B cell (primary cell): ENCODE measurements at regions of chr5 and their contacts with region 1.

Region 1: GRCh38 chr5:115289104-115289503 is 7.3 kb downstream of the CCDC112 start:
- DNase-seq: no peak
- ATAC-seq: no peak
- H3K4me3 ChIP-seq: no peak overlapping the region
- H3K4me3 Mint-ChIP-seq: no peak overlapping the region
- H3K27ac ChIP-seq: no peak overlapping the region
- H3K27ac Mint-ChIP-seq: no peak overlapping the region
- H3K4me1 ChIP-seq: no peaks in the 10 kb centered on the region
- H3K4me1 Mint-ChIP-seq: peaks cover 12% of the 10 kb centered on the region
- H3K27me3 ChIP-seq: no peaks in the 10 kb centered on the region
- H3K27me3 Mint-ChIP-seq: no peaks in the 10 kb centered on the region
- CTCF ChIP-seq: no peak

Region 2: DNA sequence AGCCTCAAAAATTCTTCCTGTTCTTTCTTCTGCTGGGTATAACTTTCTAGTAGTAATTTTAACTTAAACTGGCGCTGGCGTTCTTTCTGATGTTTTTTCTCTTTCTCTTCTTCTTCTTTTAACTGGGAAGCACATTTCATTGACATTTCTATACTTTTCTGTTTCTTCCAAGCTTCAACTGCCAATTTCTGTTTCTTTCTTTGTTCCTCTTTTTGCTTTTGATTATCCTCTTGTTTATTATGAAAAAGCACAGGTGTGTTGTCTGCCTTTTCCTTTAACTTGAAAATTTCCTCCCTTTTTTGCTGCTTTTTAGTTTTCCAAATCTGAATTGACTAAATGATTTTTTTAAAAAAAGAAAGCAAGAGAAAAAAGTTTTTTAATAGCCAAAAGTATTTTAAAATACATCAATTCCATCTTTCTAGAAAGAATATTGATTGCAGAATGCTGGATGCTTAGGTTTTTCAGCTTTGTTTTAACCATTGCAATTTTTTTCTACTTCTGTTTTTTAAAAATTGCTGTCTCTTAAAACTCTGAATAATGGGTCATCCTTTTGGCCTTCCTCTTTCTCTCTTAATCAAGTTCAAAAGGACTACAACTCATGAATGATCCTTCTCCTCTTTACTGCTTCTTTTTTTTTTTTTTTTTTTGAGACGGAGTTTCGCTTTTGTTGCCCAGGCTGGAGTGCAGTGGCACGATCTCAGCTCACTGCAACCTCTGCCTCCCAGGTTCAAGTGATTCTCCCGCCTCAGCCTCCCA is 17.6 kb before region 1 on chr5:
- CTCF ChIA-PET with region 1: no interaction called
- POLR2A ChIA-PET with region 1: no interaction called
- intact Hi-C with region 1: loop called (anchors 2 kb)
- DNase-seq: peak; percentile 16
- ATAC-seq: peak; percentile 33
- H3K4me3 ChIP-seq: peak overlapping the region in 1 of 5 experiments; percentile 34
- H3K4me3 Mint-ChIP-seq: peak overlapping the region; percentile 52
- H3K27ac ChIP-seq: peak overlapping the region; percentile 48 to 65
- H3K27ac Mint-ChIP-seq: peak overlapping the region; percentile 59
- H3K4me1 ChIP-seq: peaks cover 34 to 38% of the 10 kb centered on the region in 2 donors
- H3K4me1 Mint-ChIP-seq: peaks cover 44% of the 10 kb centered on the region
- H3K27me3 ChIP-seq: no peaks in the 10 kb centered on the region
- H3K27me3 Mint-ChIP-seq: no peaks in the 10 kb centered on the region
- CTCF ChIP-seq: no peak

Region 3: GRCh38 chr5:115377468-115378217 is 88.5 kb after region 1 on chr5:
- CTCF ChIA-PET with region 1: no interaction called
- POLR2A ChIA-PET with region 1: no interaction called
- intact Hi-C with region 1: no loop called
- DNase-seq: no peak
- ATAC-seq: no peak
- H3K4me3 ChIP-seq: no peak overlapping the region
- H3K4me3 Mint-ChIP-seq: no peak overlapping the region
- H3K27ac ChIP-seq: no peak overlapping the region
- H3K27ac Mint-ChIP-seq: no peak overlapping the region
- H3K4me1 ChIP-seq: no peaks in the 10 kb centered on the region
- H3K4me1 Mint-ChIP-seq: no peaks in the 10 kb centered on the region
- H3K27me3 ChIP-seq: no peaks in the 10 kb centered on the region
- H3K27me3 Mint-ChIP-seq: no peaks in the 10 kb centered on the region
- CTCF ChIP-seq: no peak